Transverse colon (tissue), 4 donors: ENCODE measurements at regions of chr3 and their contacts with region 1.

Region 1: GRCh38 chr3:16012086-16012485 is 162.4 kb upstream of the GALNT15 start:
- DNase-seq: no peak
- H3K4me3 ChIP-seq: no peak overlapping the region
- H3K27ac ChIP-seq: no peak overlapping the region
- H3K4me1 ChIP-seq: no peaks in the 10 kb centered on the region
- H3K27me3 ChIP-seq: no peaks in the 10 kb centered on the region
- CTCF ChIP-seq: no peak
- EP300 ChIP-seq: no peak
- POLR2A ChIP-seq: no peak

Region 2: DNA sequence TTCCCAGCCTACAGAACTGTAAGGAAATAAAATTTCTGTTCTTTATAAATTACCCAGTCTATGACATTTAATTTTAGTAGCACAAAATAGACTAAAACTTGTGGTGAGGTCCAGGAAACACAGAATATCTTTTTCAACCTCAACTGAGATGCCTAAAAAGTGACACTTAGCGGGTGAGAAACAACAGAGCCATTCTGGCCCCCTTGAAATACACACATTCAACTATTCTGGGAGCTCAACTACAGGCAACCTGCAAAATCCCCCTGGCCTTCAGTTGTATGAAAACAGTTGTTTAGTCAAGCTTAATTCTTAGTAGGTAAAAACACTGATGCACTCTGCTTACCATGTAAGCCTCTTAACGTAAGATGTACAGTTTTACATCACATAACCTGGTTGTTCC is 281.1 kb before region 1 on chr3:
- in situ Hi-C with region 1: no loop called
- intact Hi-C with region 1: no loop called
- DNase-seq: no peak
- H3K4me3 ChIP-seq: no peak overlapping the region
- H3K27ac ChIP-seq: no peak overlapping the region
- H3K4me1 ChIP-seq: no peaks in the 10 kb centered on the region
- H3K27me3 ChIP-seq: no peaks in the 10 kb centered on the region
- CTCF ChIP-seq: no peak
- EP300 ChIP-seq: no peak
- POLR2A ChIP-seq: no peak

Region 3: GRCh38 chr3:16875876-16876550 is 863.9 kb after region 1 on chr3:
- in situ Hi-C with region 1: no loop called
- intact Hi-C with region 1: loop called (anchors 5 kb)
- DNase-seq: no peak
- H3K4me3 ChIP-seq: no peak overlapping the region
- H3K27ac ChIP-seq: no peak overlapping the region
- H3K4me1 ChIP-seq: no peaks in the 10 kb centered on the region
- H3K27me3 ChIP-seq: no peaks in the 10 kb centered on the region
- CTCF ChIP-seq: no peak
- EP300 ChIP-seq: no peak
- POLR2A ChIP-seq: no peak